ENCODE measurements at regions of chr12 and their contacts with region 1.

Region 1: GRCh38 chr12:69985656-69986055 is 160.6 kb downstream of the MYRFL start:
- DNase-seq: no peak
- H3K4me3 ChIP-seq: no peak overlapping the region
- H3K27ac ChIP-seq: no peak overlapping the region
- H3K4me1 ChIP-seq: peaks cover 0 to 29% (median 19%) of the 10 kb centered on the region in 4 donors
- H3K27me3 ChIP-seq: no peaks in the 10 kb centered on the region
- CTCF ChIP-seq: no peak

Region 2: GRCh38 chr12:69566603-69567002 is 419.1 kb before region 1 on chr12:
- intact Hi-C with region 1: no loop called
- DNase-seq: no peak
- H3K4me3 ChIP-seq: no peak overlapping the region
- H3K27ac ChIP-seq: no peak overlapping the region
- H3K4me1 ChIP-seq: peaks cover 0 to 3% (median 0%) of the 10 kb centered on the region in 4 donors
- H3K27me3 ChIP-seq: no peaks in the 10 kb centered on the region
- CTCF ChIP-seq: no peak

Region 3: GRCh38 chr12:70007687-70008086 is 22.0 kb after region 1 on chr12:
- intact Hi-C with region 1: no loop called
- DNase-seq: no peak
- H3K4me3 ChIP-seq: no peak overlapping the region
- H3K27ac ChIP-seq: no peak overlapping the region
- H3K4me1 ChIP-seq: peaks cover 0 to 6% (median 4%) of the 10 kb centered on the region in 4 donors
- H3K27me3 ChIP-seq: no peaks in the 10 kb centered on the region
- CTCF ChIP-seq: no peak

Region 4: DNA sequence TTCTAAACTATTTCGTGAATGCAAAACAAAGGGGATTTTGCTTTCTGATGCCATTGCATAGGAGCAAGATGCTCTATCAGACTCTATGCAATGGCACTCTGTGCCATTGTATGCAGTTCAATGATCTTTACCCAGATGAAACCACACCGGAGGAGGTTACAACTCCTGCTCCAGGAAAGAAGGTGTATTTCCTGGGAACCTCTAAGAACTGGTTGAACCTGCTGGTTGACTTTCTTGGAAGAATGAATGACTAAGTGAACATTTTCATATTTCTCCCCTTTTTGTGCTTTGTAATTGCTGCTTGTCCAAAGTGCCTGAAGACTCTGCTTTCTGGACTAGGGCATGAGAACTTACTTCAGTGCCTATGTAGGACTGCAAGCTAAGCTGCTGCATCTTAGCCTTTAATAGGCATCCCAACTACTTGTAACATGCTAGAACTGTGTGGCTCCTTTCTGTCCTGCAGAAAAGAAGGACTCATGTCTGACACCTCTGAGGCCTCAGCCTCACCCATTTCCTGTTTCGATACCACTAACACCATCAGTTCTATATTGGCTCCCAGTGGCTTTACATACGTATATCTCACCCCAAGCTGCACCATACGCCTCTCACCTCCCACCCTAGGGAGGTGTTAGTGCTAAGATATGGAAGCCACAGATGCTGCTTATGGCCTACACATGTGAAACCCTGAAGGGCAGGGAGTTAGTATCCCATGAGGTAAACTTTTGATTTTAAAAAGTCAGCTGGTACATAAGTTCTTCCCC is 64.1 kb after region 1 on chr12:
- intact Hi-C with region 1: loop called (anchors 10 kb)
- DNase-seq: no peak
- H3K4me3 ChIP-seq: no peak overlapping the region
- H3K27ac ChIP-seq: no peak overlapping the region
- H3K4me1 ChIP-seq: peaks cover 0 to 12% (median 0%) of the 10 kb centered on the region in 4 donors
- H3K27me3 ChIP-seq: no peaks in the 10 kb centered on the region
- CTCF ChIP-seq: no peak

Measured in tibial artery (tissue), 4 donors.